Breast epithelium (tissue), 4 donors: ENCODE measurements at regions of chr4 and their contacts with region 1.

Region 1: GRCh38 chr4:11640584-11640983 is 211.9 kb upstream of the HS3ST1 start:
- DNase-seq: no peak
- H3K4me3 ChIP-seq: no peak overlapping the region
- H3K27ac ChIP-seq: no peak overlapping the region
- H3K4me1 ChIP-seq: no peaks in the 10 kb centered on the region
- H3K27me3 ChIP-seq: no peaks in the 10 kb centered on the region
- CTCF ChIP-seq: no peak
- POLR2A ChIP-seq: no peak

Region 2: DNA sequence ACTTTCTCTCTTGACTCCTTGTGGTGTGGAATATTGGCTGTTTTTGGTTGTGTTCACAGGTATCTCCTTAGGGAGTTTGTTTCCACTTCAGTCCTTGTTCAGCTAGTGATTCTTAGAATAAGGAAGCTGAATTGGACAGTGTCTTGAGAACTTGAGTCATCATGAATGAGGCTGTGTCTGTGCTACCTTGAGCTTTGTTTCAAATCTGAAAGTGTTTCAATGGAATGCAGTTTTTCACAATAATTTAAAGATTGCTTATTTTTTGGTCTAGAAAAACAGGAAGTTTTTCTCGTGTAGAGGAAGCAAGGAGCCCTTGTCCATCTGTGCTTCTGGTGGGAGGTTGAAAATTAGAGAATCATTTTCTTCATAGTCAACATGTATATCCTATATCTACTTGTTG is 1259.8 kb before region 1 on chr4:
- intact Hi-C with region 1: no loop called
- DNase-seq: no peak
- H3K4me3 ChIP-seq: no peak overlapping the region
- H3K27ac ChIP-seq: no peak overlapping the region
- H3K4me1 ChIP-seq: no peaks in the 10 kb centered on the region
- H3K27me3 ChIP-seq: no peaks in the 10 kb centered on the region
- CTCF ChIP-seq: no peak
- POLR2A ChIP-seq: no peak

Region 3: GRCh38 chr4:11505221-11505971 is 135.2 kb before region 1 on chr4:
- intact Hi-C with region 1: loop called (anchors 5 kb)
- DNase-seq: peak in 1 of 2 donors; percentile 20
- H3K4me3 ChIP-seq: no peak overlapping the region
- H3K27ac ChIP-seq: peak overlapping the region; percentile 33 to 74
- H3K4me1 ChIP-seq: peaks cover 0 to 9% of the 10 kb centered on the region in 2 donors
- H3K27me3 ChIP-seq: no peaks in the 10 kb centered on the region
- CTCF ChIP-seq: no peak
- POLR2A ChIP-seq: no peak

Region 4: DNA sequence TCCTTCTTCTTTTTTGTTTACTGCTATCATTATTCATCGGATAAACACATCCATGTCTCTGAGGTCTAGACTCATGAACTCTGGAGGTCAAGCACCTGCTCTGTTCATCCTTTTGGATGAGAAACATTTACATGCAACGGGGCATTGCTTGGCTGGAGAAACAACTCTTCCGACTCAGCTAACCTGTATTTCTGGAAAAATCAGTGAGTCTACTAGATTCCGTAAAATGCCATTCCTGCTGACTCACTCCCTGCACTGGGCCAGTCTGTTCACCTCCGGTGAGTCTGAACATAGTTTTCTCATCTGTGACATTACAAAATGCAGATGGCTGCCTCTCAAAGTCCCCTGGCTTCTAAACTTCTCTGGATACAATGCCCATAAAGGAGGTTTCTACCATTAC is 26.2 kb before region 1 on chr4:
- intact Hi-C with region 1: no loop called
- DNase-seq: peak in 1 of 2 donors; percentile 37
- H3K4me3 ChIP-seq: no peak overlapping the region
- H3K27ac ChIP-seq: no peak overlapping the region
- H3K4me1 ChIP-seq: peaks cover 0 to 3% of the 10 kb centered on the region in 2 donors
- H3K27me3 ChIP-seq: no peaks in the 10 kb centered on the region
- CTCF ChIP-seq: no peak
- POLR2A ChIP-seq: no peak

Region 5: DNA sequence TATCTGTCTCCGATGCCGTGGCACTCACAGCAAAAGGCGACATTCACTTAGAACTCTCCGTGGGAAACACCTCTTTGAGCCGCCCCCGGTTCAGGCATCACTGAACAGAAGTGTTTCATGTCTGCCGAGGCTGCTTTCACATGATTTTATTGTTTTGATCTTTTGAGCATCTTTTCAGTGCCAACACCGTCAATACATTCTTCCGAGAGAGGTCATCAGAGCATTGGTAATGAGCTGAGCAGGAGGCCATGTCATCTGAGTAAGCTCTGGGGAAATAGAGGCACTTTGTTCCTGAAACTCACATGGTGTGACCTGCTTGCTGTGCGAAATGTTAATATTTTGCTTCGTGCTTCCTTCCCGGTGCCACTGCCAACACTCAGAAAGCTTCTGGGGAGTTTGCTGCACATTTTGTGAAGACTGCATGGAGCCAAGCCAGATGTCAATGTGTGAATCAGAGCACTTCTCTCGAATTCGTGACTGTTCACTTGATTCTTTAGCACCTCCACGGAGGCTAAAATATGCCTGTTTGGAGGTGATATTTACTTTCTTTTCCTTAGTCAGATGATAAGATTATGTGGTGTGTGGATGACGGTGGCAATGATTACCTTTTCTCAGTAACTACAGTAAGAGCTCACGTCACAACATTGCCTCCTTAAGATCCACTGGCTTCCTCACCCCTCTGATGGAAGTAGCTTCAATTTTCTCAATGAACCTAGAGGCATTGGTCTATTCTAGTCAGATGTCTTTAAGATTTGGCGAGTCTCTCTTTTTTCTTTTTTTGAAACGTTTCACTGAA is 10.4 kb after region 1 on chr4:
- intact Hi-C with region 1: loop called (anchors 1 kb)
- DNase-seq: no peak
- H3K4me3 ChIP-seq: peak overlapping the region in 2 of 3 donors; percentile 5 to 11
- H3K27ac ChIP-seq: no peak overlapping the region
- H3K4me1 ChIP-seq: no peaks in the 10 kb centered on the region
- H3K27me3 ChIP-seq: no peaks in the 10 kb centered on the region
- CTCF ChIP-seq: no peak
- POLR2A ChIP-seq: no peak